ENCODE measurements at regions of chr3 and their contacts with region 1.

Region 1: DNA sequence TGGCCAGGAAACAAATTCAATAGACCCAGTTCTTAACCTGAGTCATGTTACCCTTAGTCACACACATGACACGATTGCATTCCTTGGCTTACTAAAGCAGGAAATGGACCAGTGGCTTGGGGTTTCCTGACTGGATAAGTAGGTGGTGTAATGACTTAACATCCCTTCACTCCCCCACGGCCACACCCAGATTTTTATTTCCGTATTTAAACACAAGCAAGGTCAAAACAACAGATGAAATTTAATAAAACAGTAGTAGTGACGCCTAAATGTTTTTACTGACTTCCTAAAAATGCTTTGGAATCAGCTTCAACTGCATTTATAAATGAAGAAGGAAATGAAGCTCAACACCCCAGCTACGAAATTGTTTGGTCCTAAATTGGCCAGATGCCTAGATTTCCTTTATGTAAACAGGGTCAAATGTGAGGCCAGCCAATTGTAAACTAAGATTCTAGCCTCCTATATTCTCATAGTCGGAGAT is 324.3 kb downstream of the CHST2 start:
- DNase-seq: peak; percentile 60
- H3K4me3 Mint-ChIP-seq: no peak overlapping the region
- H3K27ac Mint-ChIP-seq: peak overlapping the region; percentile 10
- H3K4me1 Mint-ChIP-seq: peaks cover 32% of the 10 kb centered on the region
- H3K27me3 Mint-ChIP-seq: no peaks in the 10 kb centered on the region

Region 2: GRCh38 chr3:143276592-143276991 is 167.3 kb before region 1 on chr3:
- CTCF ChIA-PET with region 1: no interaction called
- intact Hi-C with region 1: loop called (anchors 5 kb)
- DNase-seq: no peak
- H3K4me3 Mint-ChIP-seq: no peak overlapping the region
- H3K27ac Mint-ChIP-seq: no peak overlapping the region
- H3K4me1 Mint-ChIP-seq: peaks cover 17% of the 10 kb centered on the region
- H3K27me3 Mint-ChIP-seq: no peaks in the 10 kb centered on the region

Region 3: DNA sequence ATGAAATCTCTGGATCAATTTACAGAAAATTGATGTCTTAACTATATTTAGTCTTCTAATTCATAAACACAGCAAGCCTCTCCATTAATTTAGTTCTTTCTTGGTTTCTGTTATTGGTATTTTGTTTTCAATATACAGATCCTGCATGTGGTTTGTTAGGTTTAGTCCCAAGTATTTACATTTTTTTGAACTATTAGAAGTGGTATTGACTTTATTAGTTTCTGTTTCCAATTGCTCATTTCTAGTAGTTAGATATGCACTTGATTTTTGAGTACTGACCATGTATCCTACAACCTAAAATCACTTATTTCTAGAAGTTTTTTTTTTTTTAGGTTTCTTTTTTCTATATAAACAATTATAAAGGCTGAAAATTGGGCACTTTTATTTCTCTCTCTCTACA is 11.6 kb after region 1 on chr3:
- CTCF ChIA-PET with region 1: no interaction called
- intact Hi-C with region 1: no loop called
- DNase-seq: no peak
- H3K4me3 Mint-ChIP-seq: no peak overlapping the region
- H3K27ac Mint-ChIP-seq: no peak overlapping the region
- H3K4me1 Mint-ChIP-seq: no peaks in the 10 kb centered on the region
- H3K27me3 Mint-ChIP-seq: no peaks in the 10 kb centered on the region

Region 4: GRCh38 chr3:143751643-143752178 is 307.8 kb after region 1 on chr3:
- CTCF ChIA-PET with region 1: no interaction called
- intact Hi-C with region 1: loop called (anchors 5 kb)
- DNase-seq: peak; percentile 57
- H3K4me3 Mint-ChIP-seq: peak overlapping the region; percentile 56
- H3K27ac Mint-ChIP-seq: peak overlapping the region; percentile 81
- H3K4me1 Mint-ChIP-seq: peaks cover 49% of the 10 kb centered on the region
- H3K27me3 Mint-ChIP-seq: no peaks in the 10 kb centered on the region